AG04450 (cell line): ENCODE measurements at regions of chr19 and their contacts with region 1.

Region 1: GRCh38 chr19:49200238-49200862 is 42.8 kb downstream of the TRPM4 start:
- DNase-seq: no peak
- H3K4me3 ChIP-seq: no peak overlapping the region
- H3K27ac ChIP-seq: no peak overlapping the region
- H3K27me3 ChIP-seq: no peaks in the 10 kb centered on the region
- CTCF ChIP-seq: no peak

Region 2: GRCh38 chr19:49097455-49098288 is 102.7 kb before region 1 on chr19:
- CTCF ChIA-PET with region 1: interaction called, 55 read pairs
- POLR2A ChIA-PET with region 1: interaction called, 10 read pairs
- DNase-seq: peak; percentile 53
- H3K4me3 ChIP-seq: no peak overlapping the region
- H3K27ac ChIP-seq: no peak overlapping the region
- H3K27me3 ChIP-seq: no peaks in the 10 kb centered on the region
- CTCF ChIP-seq: peak; percentile 99

Region 3: DNA sequence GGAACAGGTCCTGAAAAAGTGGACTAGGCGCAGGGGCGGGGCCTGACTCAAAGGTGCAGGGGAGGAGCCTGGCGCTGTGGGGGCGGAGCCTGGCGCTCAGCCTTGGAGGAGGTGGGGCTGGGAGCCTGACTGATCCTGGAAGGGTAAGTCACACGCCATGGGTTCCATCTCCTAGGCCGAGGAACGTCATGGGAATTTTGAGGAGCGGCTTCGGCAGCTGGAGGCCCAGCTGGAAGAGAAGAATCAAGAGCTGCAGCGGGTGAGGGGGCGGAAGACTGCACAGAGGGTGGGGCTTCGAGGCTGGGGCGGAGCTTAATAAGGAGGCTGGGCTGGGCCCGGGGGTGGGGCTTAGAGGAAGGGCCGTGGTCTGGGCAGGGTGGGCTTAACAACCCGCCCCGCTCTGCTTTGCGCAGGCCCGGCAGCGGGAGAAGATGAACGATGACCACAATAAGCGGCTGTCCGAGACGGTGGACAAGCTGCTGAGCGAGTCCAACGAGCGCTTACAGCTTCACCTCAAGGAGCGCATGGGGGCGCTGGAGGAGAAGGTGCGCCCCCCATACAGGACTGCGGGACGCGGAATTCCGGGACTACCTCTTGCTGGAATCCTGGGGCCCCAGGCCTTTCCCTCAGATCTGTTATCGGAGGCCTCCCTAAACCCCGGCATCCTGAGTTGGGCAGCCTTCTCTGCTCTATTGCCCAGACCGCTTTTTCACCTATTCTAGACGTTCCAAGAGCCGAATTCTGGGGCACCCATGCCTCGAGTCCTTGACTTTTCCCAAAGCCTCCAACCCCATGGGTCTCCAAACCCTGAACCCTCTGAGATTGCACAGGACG is 66.5 kb before region 1 on chr19:
- CTCF ChIA-PET with region 1: interaction called, 17 read pairs
- POLR2A ChIA-PET with region 1: no interaction called
- DNase-seq: no peak
- H3K4me3 ChIP-seq: peak overlapping the region; percentile 38
- H3K27ac ChIP-seq: peak overlapping the region; percentile 11
- H3K27me3 ChIP-seq: no peaks in the 10 kb centered on the region
- CTCF ChIP-seq: peak; percentile 23

Region 4: GRCh38 chr19:49161987-49162386 is 38.4 kb before region 1 on chr19:
- CTCF ChIA-PET with region 1: interaction called, 24 read pairs
- POLR2A ChIA-PET with region 1: no interaction called
- DNase-seq: no peak
- H3K4me3 ChIP-seq: no peak overlapping the region
- H3K27ac ChIP-seq: no peak overlapping the region
- H3K27me3 ChIP-seq: no peaks in the 10 kb centered on the region
- CTCF ChIP-seq: no peak

Region 5: DNA sequence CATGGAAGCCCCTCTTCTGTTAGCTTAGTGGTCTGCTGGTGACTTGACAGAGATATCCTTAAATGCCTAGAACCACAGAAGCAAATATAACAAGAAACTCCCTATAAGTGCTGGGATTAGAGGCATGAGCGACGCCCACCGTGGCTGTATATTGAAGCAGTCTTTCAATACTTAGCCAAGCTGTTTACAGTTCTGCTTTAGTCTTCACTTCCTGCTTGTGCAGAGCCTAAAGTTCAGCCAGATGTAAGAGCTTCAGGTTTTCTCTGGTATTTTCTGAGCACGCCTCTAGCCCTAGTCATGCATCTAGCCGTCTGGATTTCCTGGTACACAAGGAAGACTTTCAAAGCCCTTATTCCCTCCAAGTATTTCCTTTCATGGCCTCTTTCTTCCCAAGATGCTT is 14.2 kb before region 1 on chr19:
- CTCF ChIA-PET with region 1: interaction called, 54 read pairs
- POLR2A ChIA-PET with region 1: no interaction called
- DNase-seq: no peak
- H3K4me3 ChIP-seq: no peak overlapping the region
- H3K27ac ChIP-seq: no peak overlapping the region
- H3K27me3 ChIP-seq: no peaks in the 10 kb centered on the region
- CTCF ChIP-seq: no peak

Region 6: DNA sequence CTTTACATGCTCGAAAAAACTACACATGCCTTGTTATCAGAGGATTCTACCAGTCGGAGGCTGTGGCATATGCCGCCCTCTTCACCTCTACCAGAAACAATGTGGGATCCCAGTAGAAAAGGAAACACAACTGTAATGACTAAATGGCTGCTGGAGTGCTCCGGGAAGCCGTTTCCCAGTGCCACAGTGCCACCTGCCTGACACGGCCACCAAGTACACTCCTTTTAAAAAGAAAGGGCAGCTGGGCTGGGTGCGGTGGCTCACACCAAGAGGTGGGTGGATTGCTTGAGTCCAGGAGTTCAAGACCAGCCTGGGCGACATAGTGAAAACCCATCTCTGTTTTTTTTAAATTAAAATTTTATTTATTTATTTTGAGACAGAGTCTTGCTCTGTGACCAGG is 24.5 kb after region 1 on chr19:
- CTCF ChIA-PET with region 1: interaction called, 11 read pairs
- POLR2A ChIA-PET with region 1: no interaction called
- DNase-seq: no peak
- H3K4me3 ChIP-seq: no peak overlapping the region
- H3K27ac ChIP-seq: no peak overlapping the region
- H3K27me3 ChIP-seq: peaks cover 2% of the 10 kb centered on the region
- CTCF ChIP-seq: peak; percentile 43

Region 7: DNA sequence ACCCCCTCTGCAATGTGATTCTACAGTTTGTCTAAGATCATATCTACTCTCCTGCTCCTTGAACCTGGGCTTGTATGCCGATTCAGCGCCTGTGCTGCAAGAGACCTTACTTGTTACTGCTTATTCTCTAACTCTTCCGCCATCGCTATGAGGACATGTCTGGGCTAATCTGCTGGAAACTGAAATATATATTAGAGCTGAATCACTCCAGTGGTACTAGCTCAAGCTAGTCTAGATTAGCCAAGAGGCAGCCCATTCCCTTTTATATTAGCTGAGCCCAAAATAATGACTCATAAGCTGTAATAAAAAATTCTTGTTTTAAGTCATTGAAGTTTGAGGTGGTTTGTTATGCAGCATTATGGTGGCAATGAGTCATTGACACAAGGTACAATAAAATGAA is 71.8 kb after region 1 on chr19:
- CTCF ChIA-PET with region 1: no interaction called
- POLR2A ChIA-PET with region 1: no interaction called
- DNase-seq: no peak
- H3K4me3 ChIP-seq: no peak overlapping the region
- H3K27ac ChIP-seq: no peak overlapping the region
- H3K27me3 ChIP-seq: peaks cover 3% of the 10 kb centered on the region
- CTCF ChIP-seq: no peak

Region 8: GRCh38 chr19:49294401-49294800 is 94.1 kb after region 1 on chr19:
- CTCF ChIA-PET with region 1: no interaction called
- POLR2A ChIA-PET with region 1: no interaction called
- DNase-seq: no peak
- H3K4me3 ChIP-seq: no peak overlapping the region
- H3K27ac ChIP-seq: no peak overlapping the region
- H3K27me3 ChIP-seq: no peaks in the 10 kb centered on the region
- CTCF ChIP-seq: no peak

Region 9: GRCh38 chr19:49374665-49375434 is 174.5 kb after region 1 on chr19:
- CTCF ChIA-PET with region 1: no interaction called
- POLR2A ChIA-PET with region 1: no interaction called
- DNase-seq: no peak
- H3K4me3 ChIP-seq: no peak overlapping the region
- H3K27ac ChIP-seq: no peak overlapping the region
- H3K27me3 ChIP-seq: peaks cover 6% of the 10 kb centered on the region
- CTCF ChIP-seq: no peak

Region 10: GRCh38 chr19:49391581-49392399 is 191.4 kb after region 1 on chr19:
- CTCF ChIA-PET with region 1: no interaction called
- POLR2A ChIA-PET with region 1: no interaction called
- DNase-seq: peak; percentile 20
- H3K4me3 ChIP-seq: no peak overlapping the region
- H3K27ac ChIP-seq: no peak overlapping the region
- H3K27me3 ChIP-seq: peaks cover 26% of the 10 kb centered on the region
- CTCF ChIP-seq: peak; percentile 75